Common myeloid progenitor, CD34-positive (primary cell): ENCODE measurements at regions of chr11 and their contacts with region 1.

Region 1: GRCh38 chr11:18105802-18106574 is at the start of gene SAAL1:
- DNase-seq: peak; percentile 88 to 92 (median 92)
- H3K4me3 ChIP-seq: peak within 1 kb of the TSS; percentile 59 to 97 (median 96)
- H3K27ac ChIP-seq: peak within 1 kb of the TSS; percentile 40 to 71
- H3K4me1 ChIP-seq: peaks cover 3 to 13% (median 5%) of the 10 kb centered on the region in 4 experiments
- H3K27me3 ChIP-seq: peaks cover 0 to 8% (median 3%) of the 10 kb centered on the region in 5 experiments

Region 2: GRCh38 chr11:17960091-17960490 is 145.9 kb before region 1 on chr11:
- CTCF ChIA-PET with region 1: no interaction called
- POLR2A ChIA-PET with region 1: no interaction called
- DNase-seq: no peak
- H3K4me3 ChIP-seq: no peak overlapping the region
- H3K27ac ChIP-seq: no peak overlapping the region
- H3K4me1 ChIP-seq: no peaks in the 10 kb centered on the region
- H3K27me3 ChIP-seq: no peaks in the 10 kb centered on the region

Region 3: DNA sequence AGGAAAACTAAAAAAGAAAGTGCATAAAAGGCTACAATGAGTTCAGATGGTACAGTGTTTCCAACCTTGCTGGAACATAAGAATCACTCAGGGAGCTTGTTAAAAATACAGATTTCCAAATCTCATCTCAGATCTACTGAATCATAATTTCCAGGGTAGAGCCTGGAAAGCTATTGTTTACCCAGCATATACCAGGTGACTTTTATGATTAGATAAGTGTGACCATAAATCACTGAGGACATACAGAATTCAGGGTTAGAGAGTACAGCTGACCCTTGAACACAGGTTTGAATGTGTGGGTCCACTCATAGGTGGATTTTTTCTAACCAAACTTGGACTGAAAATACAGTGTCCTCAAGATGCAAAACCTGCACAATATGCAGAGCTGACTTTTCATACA is 12.0 kb before region 1 on chr11:
- CTCF ChIA-PET with region 1: interaction called, 26 read pairs
- POLR2A ChIA-PET with region 1: no interaction called
- DNase-seq: no peak
- H3K4me3 ChIP-seq: no peak overlapping the region
- H3K27ac ChIP-seq: no peak overlapping the region
- H3K4me1 ChIP-seq: no peaks in the 10 kb centered on the region
- H3K27me3 ChIP-seq: no peaks in the 10 kb centered on the region